ENCODE measurements at regions of chr18 and their contacts with region 1.

Region 1: GRCh38 chr18:50287441-50288347 is at the start of gene CXXC1:
- DNase-seq: peak; percentile 100
- H3K4me3 ChIP-seq: peak within 1 kb of the TSS; percentile 76 to 88 (median 78)
- H3K27ac ChIP-seq: peak within 1 kb of the TSS; percentile 33
- H3K4me1 ChIP-seq: peaks cover 5% of the 10 kb centered on the region
- H3K27me3 ChIP-seq: peaks cover 0 to 1% of the 10 kb centered on the region in 2 experiments
- CTCF ChIP-seq: peak; percentile 35 to 69
- POLR2A ChIP-seq: peak; percentile 77
- total RNA-seq, gene CXXC1: 64.4 and 66.9 TPM in 2 replicates

Region 2: GRCh38 chr18:50297621-50298442 is 10.1 kb after region 1 on chr18:
- CTCF ChIA-PET with region 1: interaction called, 4 read pairs
- POLR2A ChIA-PET with region 1: no interaction called
- dilution Hi-C with region 1: no loop called
- intact Hi-C with region 1: loop called (anchors 1 kb)
- DNase-seq: peak; percentile 62
- H3K4me3 ChIP-seq: peak overlapping the region in 2 of 3 experiments; percentile 6 to 32
- H3K27ac ChIP-seq: no peak overlapping the region
- H3K4me1 ChIP-seq: no peaks in the 10 kb centered on the region
- H3K27me3 ChIP-seq: peaks cover 25 to 32% of the 10 kb centered on the region in 2 experiments
- CTCF ChIP-seq: no peak
- POLR2A ChIP-seq: no peak

Region 3: DNA sequence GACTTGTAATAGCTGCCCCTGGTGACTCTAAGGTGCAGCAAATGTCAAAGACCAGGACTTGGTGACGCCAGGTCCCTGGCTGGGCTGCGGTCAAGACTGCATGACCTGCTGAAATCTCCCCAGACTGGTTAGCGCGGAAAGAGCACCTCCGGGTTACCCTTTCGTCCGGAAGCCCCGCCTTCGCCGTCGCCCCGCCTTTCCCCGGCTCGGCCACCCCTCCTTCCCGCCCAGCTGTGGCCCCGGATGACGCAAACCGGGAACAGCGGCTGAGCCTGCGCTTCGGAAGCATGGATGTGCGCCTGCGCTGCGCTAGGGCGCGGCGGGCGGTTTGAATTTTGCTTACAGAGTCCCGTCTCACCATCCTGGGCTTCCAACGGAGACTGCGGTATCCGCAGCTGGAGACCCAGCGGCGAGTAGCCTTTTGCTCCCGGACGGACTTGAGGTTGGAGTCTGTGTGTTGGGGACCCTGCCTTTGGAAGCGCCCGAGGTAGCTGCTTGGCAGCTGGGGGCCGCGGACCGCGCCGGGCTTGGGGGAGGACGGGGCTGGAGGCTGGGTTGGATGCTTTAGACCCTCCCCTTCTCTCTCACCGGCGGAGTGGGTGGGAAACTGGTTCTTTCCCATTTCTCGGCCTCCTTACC is 87.2 kb after region 1 on chr18 and contains the start of gene SKA1:
- CTCF ChIA-PET with region 1: no interaction called
- POLR2A ChIA-PET with region 1: no interaction called
- dilution Hi-C with region 1: no loop called
- intact Hi-C with region 1: loop called (anchors 2 kb)
- DNase-seq: peak; percentile 95
- H3K4me3 ChIP-seq: peak within 1 kb of the TSS; percentile 49 to 88 (median 58)
- H3K27ac ChIP-seq: peak within 1 kb of the TSS; percentile 21
- H3K4me1 ChIP-seq: peaks cover 9% of the 10 kb centered on the region
- H3K27me3 ChIP-seq: peaks cover 0 to 3% of the 10 kb centered on the region in 2 experiments
- CTCF ChIP-seq: no peak
- POLR2A ChIP-seq: peak; percentile 79
- total RNA-seq, gene SKA1: 21.9 and 23.9 TPM in 2 replicates